ENCODE measurements at regions of chr15 and their contacts with region 1.

Region 1: GRCh38 chr15:73950831-73951561 is 24.7 kb downstream of the LOXL1 start:
- DNase-seq: peak; percentile 97
- H3K4me3 ChIP-seq: no peak overlapping the region
- H3K27ac ChIP-seq: peak overlapping the region; percentile 75
- H3K4me1 ChIP-seq: peaks cover 23% of the 10 kb centered on the region
- H3K27me3 ChIP-seq: no peaks in the 10 kb centered on the region
- CTCF ChIP-seq: peak; percentile 85

Region 2: DNA sequence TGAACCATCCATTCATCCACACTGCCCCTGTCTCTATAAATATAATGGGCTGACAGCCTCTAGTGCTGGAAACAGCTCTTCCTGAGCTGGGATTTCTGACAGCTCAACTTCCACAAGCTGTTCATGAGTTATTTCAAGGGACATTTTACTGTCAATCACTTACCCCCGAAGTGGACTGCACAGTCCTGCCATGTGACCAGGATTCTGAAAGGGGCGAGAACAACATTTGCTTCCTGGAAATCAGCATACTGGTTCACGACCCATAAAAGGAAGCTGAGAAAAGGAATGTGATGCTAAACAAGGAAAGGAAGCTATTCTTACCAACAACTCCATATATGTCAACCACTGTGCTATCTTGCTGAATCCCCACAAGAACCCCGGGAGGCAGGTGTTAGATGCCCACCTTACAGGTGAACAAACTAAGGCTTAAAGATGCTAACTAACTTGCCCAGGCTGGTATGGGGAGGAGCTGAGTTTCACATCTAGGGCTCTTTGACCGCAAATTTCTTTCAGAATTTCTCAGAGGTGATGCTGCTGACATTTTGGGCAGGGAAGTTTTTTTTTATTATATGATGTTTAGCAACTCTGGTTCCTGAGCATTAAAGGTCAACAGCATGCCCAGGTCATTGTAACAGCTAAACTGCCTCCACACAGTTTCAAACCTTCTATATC is 524.5 kb before region 1 on chr15:
- CTCF ChIA-PET with region 1: no interaction called
- POLR2A ChIA-PET with region 1: no interaction called
- intact Hi-C with region 1: no loop called
- DNase-seq: no peak
- H3K4me3 ChIP-seq: no peak overlapping the region
- H3K27ac ChIP-seq: no peak overlapping the region
- H3K4me1 ChIP-seq: no peaks in the 10 kb centered on the region
- H3K27me3 ChIP-seq: peaks cover 62% of the 10 kb centered on the region
- CTCF ChIP-seq: no peak

Region 3: GRCh38 chr15:73717802-73718201 is 233.2 kb before region 1 on chr15:
- CTCF ChIA-PET with region 1: no interaction called
- POLR2A ChIA-PET with region 1: no interaction called
- intact Hi-C with region 1: no loop called
- DNase-seq: no peak
- H3K4me3 ChIP-seq: no peak overlapping the region
- H3K27ac ChIP-seq: no peak overlapping the region
- H3K4me1 ChIP-seq: peaks cover 5% of the 10 kb centered on the region
- H3K27me3 ChIP-seq: no peaks in the 10 kb centered on the region
- CTCF ChIP-seq: peak; percentile 46

Region 4: GRCh38 chr15:73888224-73889041 is 62.6 kb before region 1 on chr15:
- CTCF ChIA-PET with region 1: no interaction called
- POLR2A ChIA-PET with region 1: interaction called, 16 read pairs
- intact Hi-C with region 1: no loop called
- DNase-seq: no peak
- H3K4me3 ChIP-seq: no peak overlapping the region
- H3K27ac ChIP-seq: no peak overlapping the region
- H3K4me1 ChIP-seq: no peaks in the 10 kb centered on the region
- H3K27me3 ChIP-seq: no peaks in the 10 kb centered on the region
- CTCF ChIP-seq: no peak